Adrenal gland (tissue), 19 donors: ENCODE measurements at regions of chr15 and their contacts with region 1.

Region 1: DNA sequence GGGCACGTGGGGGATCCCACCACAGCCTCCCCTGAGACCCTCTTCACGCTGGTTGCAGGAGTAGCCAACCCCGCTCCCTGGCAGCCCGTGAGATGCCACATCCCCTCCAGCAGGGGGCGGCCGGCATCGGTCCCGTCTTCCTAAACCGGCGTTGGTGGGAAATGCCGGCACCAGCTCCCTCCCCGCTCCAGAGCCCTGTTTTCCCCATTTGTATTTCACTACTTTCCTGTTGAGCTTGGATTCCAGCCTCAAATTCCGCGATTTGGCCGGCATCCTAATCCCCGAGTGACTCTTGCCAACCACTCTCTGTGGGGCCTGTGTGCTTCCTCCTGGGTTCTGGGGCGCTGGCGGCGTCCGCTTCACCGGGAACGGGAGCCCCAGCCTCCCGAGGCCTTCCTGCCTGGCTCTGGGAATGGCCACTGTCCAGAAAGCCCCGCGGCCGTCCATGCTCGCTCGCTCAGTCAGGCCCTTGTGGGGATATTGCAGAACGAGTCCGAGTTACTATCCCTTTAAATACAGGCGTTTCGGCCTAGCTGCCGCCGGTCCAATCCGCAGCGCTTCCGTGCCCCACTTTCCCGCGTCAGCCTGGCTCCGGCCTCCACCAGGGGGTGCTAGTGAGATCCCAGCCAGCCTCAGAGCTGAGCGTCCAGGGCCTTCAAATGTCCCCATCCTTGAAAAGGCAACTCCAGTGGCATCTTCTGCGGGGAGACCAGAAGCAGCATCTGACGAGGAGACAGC is 8.1 kb upstream of the ADAMTS17 start:
- DNase-seq: peak; percentile 91 to 97 (median 92)
- H3K4me3 ChIP-seq: peak overlapping the region; percentile 44 to 86 (median 70)
- H3K27ac ChIP-seq: peak overlapping the region in 4 of 5 donors; percentile 88 to 95 (median 89)
- H3K4me1 ChIP-seq: no peaks in the 10 kb centered on the region
- H3K27me3 ChIP-seq: no peaks in the 10 kb centered on the region
- CTCF ChIP-seq: peak; percentile 70 to 95 (median 84)
- POLR2A ChIP-seq: peak in 1 of 2 donors; percentile 32

Region 2: GRCh38 chr15:100383302-100384107 is 33.6 kb after region 1 on chr15:
- intact Hi-C with region 1: loop called in 1 of 2 experiments (anchors 5 kb)
- DNase-seq: peak; percentile 30 to 61 (median 53)
- H3K4me3 ChIP-seq: no peak overlapping the region
- H3K27ac ChIP-seq: no peak overlapping the region
- H3K4me1 ChIP-seq: no peaks in the 10 kb centered on the region
- H3K27me3 ChIP-seq: no peaks in the 10 kb centered on the region
- CTCF ChIP-seq: peak; percentile 47 to 68 (median 62)
- POLR2A ChIP-seq: no peak

Region 3: GRCh38 chr15:100500226-100500990 is 150.5 kb after region 1 on chr15:
- intact Hi-C with region 1: no loop called
- DNase-seq: no peak
- H3K4me3 ChIP-seq: no peak overlapping the region
- H3K27ac ChIP-seq: no peak overlapping the region
- H3K4me1 ChIP-seq: no peaks in the 10 kb centered on the region
- H3K27me3 ChIP-seq: peaks cover 6% of the 10 kb centered on the region
- CTCF ChIP-seq: no peak
- POLR2A ChIP-seq: no peak

Region 4: GRCh38 chr15:100572362-100572983 is 222.6 kb after region 1 on chr15:
- intact Hi-C with region 1: loop called in 1 of 2 experiments (anchors 5 kb)
- DNase-seq: no peak
- H3K4me3 ChIP-seq: no peak overlapping the region
- H3K27ac ChIP-seq: no peak overlapping the region
- H3K4me1 ChIP-seq: no peaks in the 10 kb centered on the region
- H3K27me3 ChIP-seq: no peaks in the 10 kb centered on the region
- CTCF ChIP-seq: peak; percentile 30 to 66 (median 50)
- POLR2A ChIP-seq: no peak

Region 5: DNA sequence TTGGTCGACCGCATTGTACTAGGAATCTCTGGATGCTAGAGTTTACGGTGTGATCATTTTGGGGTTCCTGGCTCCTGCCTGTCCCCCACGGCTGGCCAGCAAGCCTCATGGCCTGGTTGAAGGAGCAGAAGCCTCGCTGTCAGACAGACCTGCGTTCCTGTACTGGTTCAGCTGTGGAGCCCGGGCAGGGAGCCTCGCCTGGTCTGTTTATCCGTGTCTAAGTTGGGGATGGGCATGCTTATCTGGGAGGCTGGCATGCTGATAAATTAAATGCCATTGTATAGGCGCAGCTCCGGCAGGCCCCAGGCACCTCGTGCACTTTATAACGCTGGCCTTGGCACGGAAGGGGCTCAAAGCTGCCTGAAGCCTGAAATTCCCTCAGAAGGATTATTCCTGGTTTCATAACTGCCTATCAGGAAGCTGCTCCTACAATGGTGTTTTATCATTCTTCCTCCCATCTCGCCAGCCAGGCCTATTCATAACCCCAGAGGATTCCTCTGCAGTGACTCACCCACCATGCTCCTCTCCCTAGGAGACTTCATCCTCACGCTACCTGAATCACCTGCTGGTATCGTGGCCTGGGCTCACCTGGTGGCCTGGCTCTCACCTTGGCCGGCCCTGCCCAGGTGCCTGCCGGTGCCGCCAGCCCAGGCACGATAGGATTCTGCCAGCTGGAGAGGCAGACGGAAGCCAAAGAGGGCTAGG is 363.4 kb after region 1 on chr15:
- intact Hi-C with region 1: no loop called
- DNase-seq: peak in 2 of 7 donors; percentile 13 to 15
- H3K4me3 ChIP-seq: no peak overlapping the region
- H3K27ac ChIP-seq: no peak overlapping the region
- H3K4me1 ChIP-seq: no peaks in the 10 kb centered on the region
- H3K27me3 ChIP-seq: no peaks in the 10 kb centered on the region
- CTCF ChIP-seq: no peak
- POLR2A ChIP-seq: no peak